AG04450 (cell line): ENCODE measurements at regions of chr4 and their contacts with region 1.

Region 1: GRCh38 chr4:52911684-52912294 is 49.7 kb downstream of the RASL11B start:
- DNase-seq: no peak
- H3K4me3 ChIP-seq: no peak overlapping the region
- H3K27ac ChIP-seq: no peak overlapping the region
- H3K27me3 ChIP-seq: no peaks in the 10 kb centered on the region
- CTCF ChIP-seq: peak; percentile 75

Region 2: DNA sequence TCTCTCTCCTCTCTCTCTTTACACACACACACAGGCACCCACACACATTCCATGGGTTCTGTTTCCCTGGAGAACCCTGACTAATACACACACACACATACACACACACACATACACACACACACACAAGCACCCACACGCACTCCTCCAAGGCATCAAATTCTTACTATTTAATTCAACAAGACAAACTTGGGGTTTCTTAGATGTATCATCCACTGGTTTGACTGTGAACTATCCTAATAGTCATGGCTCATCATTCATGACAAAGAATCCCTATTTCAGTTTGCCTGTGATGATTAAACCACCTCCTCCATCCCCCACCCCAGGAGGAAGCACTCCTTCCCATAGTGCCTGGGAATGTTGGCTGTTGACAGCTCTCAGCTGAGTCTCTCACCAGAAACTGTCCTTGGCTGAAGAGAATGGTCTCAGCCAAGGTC is 350.9 kb before region 1 on chr4:
- CTCF ChIA-PET with region 1: no interaction called
- POLR2A ChIA-PET with region 1: no interaction called
- DNase-seq: peak; percentile 46
- H3K4me3 ChIP-seq: no peak overlapping the region
- H3K27ac ChIP-seq: no peak overlapping the region
- H3K27me3 ChIP-seq: no peaks in the 10 kb centered on the region
- CTCF ChIP-seq: no peak

Region 3: GRCh38 chr4:52883707-52884676 is 27.8 kb before region 1 on chr4:
- CTCF ChIA-PET with region 1: interaction called, 10 read pairs
- POLR2A ChIA-PET with region 1: no interaction called
- DNase-seq: no peak
- H3K4me3 ChIP-seq: no peak overlapping the region
- H3K27ac ChIP-seq: no peak overlapping the region
- H3K27me3 ChIP-seq: no peaks in the 10 kb centered on the region
- CTCF ChIP-seq: no peak

Region 4: GRCh38 chr4:52894443-52894842 is 17.3 kb before region 1 on chr4:
- CTCF ChIA-PET with region 1: interaction called, 23 read pairs
- POLR2A ChIA-PET with region 1: interaction called, 3 read pairs
- DNase-seq: no peak
- H3K4me3 ChIP-seq: no peak overlapping the region
- H3K27ac ChIP-seq: no peak overlapping the region
- H3K27me3 ChIP-seq: no peaks in the 10 kb centered on the region
- CTCF ChIP-seq: no peak

Region 5: GRCh38 chr4:52932591-52933470 is 21.0 kb after region 1 on chr4:
- CTCF ChIA-PET with region 1: interaction called, 20 read pairs
- POLR2A ChIA-PET with region 1: no interaction called
- DNase-seq: no peak
- H3K4me3 ChIP-seq: no peak overlapping the region
- H3K27ac ChIP-seq: no peak overlapping the region
- H3K27me3 ChIP-seq: no peaks in the 10 kb centered on the region
- CTCF ChIP-seq: no peak

Region 6: DNA sequence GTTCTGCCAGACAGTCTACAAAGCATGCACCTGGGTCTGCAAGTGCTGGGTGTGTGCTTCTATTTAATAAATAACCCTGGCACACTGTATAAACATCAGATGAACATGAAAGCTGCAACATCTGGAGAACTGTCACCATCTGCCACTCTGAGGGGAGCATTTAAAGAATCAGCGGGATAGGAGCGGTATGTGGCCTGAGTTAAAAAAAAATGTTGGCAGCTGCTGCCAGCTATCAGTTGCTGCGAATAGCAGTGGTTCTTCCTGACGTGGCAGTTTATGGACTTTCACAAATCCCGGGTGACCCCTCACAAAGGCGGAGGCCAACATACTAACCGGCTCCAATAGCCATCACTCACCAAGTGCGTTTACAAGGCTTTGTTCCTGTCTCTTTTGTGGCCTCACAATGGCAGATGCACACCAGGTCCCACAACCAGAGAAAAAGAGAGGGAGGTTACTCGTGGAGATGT is 45.5 kb after region 1 on chr4:
- CTCF ChIA-PET with region 1: interaction called, 11 read pairs
- POLR2A ChIA-PET with region 1: no interaction called
- DNase-seq: no peak
- H3K4me3 ChIP-seq: no peak overlapping the region
- H3K27ac ChIP-seq: peak overlapping the region; percentile 75
- H3K27me3 ChIP-seq: no peaks in the 10 kb centered on the region
- CTCF ChIP-seq: no peak